ENCODE measurements at regions of chr5 and their contacts with region 1.

Region 1: GRCh38 chr5:160846642-160847041 is 5.4 kb downstream of the ATP10B start:
- DNase-seq: no peak
- H3K4me3 ChIP-seq: no peak overlapping the region
- H3K27ac ChIP-seq: no peak overlapping the region
- H3K4me1 ChIP-seq: no peaks in the 10 kb centered on the region
- H3K27me3 ChIP-seq: no peaks in the 10 kb centered on the region
- CTCF ChIP-seq: peak in 1 of 2 donors; percentile 30

Region 2: GRCh38 chr5:160649304-160649703 is 197.3 kb before region 1 on chr5:
- CTCF ChIA-PET with region 1: no interaction called
- dilution Hi-C with region 1: no loop called
- in situ Hi-C with region 1: no loop called
- intact Hi-C with region 1: loop called (anchors 1 kb)
- DNase-seq: peak; percentile 16
- H3K4me3 ChIP-seq: no peak overlapping the region
- H3K27ac ChIP-seq: no peak overlapping the region
- H3K4me1 ChIP-seq: no peaks in the 10 kb centered on the region
- H3K27me3 ChIP-seq: no peaks in the 10 kb centered on the region
- CTCF ChIP-seq: peak; percentile 44 to 58

Region 3: DNA sequence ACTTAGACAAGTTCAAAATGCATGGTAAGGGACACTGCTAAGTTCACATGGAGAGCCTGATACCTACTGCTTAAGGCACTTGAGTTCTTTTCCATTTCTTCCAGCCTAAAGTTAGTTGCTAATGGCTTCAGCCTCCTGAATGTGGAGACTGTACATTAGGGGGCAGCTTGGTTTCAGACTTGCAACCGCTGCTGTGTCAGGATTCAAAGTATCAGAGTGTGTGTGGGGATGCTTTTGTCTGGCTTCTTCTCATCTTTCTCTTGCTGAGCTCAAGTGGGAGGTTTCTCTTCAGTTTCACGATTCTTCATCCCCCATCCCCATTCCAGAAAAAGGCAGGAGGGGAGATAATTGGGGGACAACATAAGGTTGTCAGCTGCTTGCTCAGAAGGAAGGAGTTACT is 44.0 kb before region 1 on chr5:
- CTCF ChIA-PET with region 1: interaction called, 5 read pairs
- dilution Hi-C with region 1: no loop called
- in situ Hi-C with region 1: no loop called
- intact Hi-C with region 1: loop called (anchors 1 kb)
- DNase-seq: no peak
- H3K4me3 ChIP-seq: no peak overlapping the region
- H3K27ac ChIP-seq: no peak overlapping the region
- H3K4me1 ChIP-seq: no peaks in the 10 kb centered on the region
- H3K27me3 ChIP-seq: peaks cover under 1% of the 10 kb centered on the region
- CTCF ChIP-seq: peak in 1 of 2 donors; percentile 42